WTC11 (cell line): ENCODE measurements at regions of chr12 and their contacts with region 1.

Region 1: GRCh38 chr12:114166362-114166761 is 200.2 kb upstream of the RBM19 start:
- DNase-seq: peak; percentile 66
- ATAC-seq: peak; percentile 85
- H3K4me3 Mint-ChIP-seq: no peak overlapping the region
- H3K27ac Mint-ChIP-seq: no peak overlapping the region
- H3K4me1 Mint-ChIP-seq: peaks cover 11% of the 10 kb centered on the region
- H3K27me3 Mint-ChIP-seq: peaks cover 49% of the 10 kb centered on the region
- CTCF ChIP-seq: peak; percentile 68; the same call in 1 of the 2 replicates

Region 2: GRCh38 chr12:114013575-114014345 is 152.6 kb before region 1 on chr12:
- CTCF ChIA-PET with region 1: interaction called, 11 read pairs
- POLR2A ChIA-PET with region 1: no interaction called
- DNase-seq: peak; percentile 52
- ATAC-seq: peak; percentile 80
- H3K4me3 Mint-ChIP-seq: no peak overlapping the region
- H3K27ac Mint-ChIP-seq: no peak overlapping the region
- H3K4me1 Mint-ChIP-seq: 0 out of 2 replicates have a peak, but pooled peaks cover 3% of the 10 kb centered on the region
- H3K27me3 Mint-ChIP-seq: peaks cover 8% of the 10 kb centered on the region
- CTCF ChIP-seq: no peak

Region 3: GRCh38 chr12:114186241-114187002 is 20.1 kb after region 1 on chr12:
- CTCF ChIA-PET with region 1: interaction called, 13 read pairs
- POLR2A ChIA-PET with region 1: no interaction called
- DNase-seq: peak; percentile 58
- ATAC-seq: peak; percentile 90
- H3K4me3 Mint-ChIP-seq: peak overlapping the region; percentile 39; the same call in 1 of the 2 replicates
- H3K27ac Mint-ChIP-seq: no peak overlapping the region
- H3K4me1 Mint-ChIP-seq: peaks cover 43% of the 10 kb centered on the region
- H3K27me3 Mint-ChIP-seq: peaks cover 9% of the 10 kb centered on the region
- CTCF ChIP-seq: no peak

Region 4: DNA sequence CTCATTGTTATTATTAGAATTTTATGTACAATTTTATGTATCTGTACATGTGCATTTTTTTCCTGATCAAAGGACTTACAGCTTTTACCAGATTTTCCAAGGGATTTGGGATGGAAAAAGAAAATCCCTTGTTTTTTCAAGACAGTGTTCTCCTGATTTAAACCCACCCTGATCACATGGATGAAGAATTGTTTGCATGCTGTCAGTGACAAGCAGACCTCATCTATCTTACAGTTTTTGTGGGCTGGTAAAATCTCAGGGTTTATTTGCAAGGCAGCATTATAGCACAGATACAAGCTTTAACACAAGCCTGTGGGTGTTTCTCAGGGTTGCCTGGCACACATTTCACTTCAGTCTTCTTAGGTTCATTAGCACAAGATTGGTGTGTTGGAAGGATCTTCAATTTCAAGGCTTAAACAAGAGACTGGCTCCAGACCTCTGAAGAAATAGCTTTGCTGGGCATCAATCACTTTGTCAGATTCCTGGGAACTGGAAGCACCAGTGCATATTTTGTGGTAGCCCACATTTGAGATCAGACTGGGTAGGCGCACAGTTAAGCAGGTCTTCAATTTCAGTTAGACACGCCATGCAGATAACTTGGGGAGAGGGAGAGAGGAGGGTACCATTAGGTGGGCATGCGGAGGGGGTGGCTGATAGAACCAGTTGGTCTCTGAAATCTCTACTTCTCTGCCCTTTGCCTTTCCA is 121.6 kb after region 1 on chr12:
- CTCF ChIA-PET with region 1: no interaction called
- POLR2A ChIA-PET with region 1: no interaction called
- DNase-seq: no peak
- ATAC-seq: no peak
- H3K4me3 Mint-ChIP-seq: no peak overlapping the region
- H3K27ac Mint-ChIP-seq: no peak overlapping the region; the same call in 1 of the 2 replicates
- H3K4me1 Mint-ChIP-seq: peaks cover 57% of the 10 kb centered on the region
- H3K27me3 Mint-ChIP-seq: no peaks in the 10 kb centered on the region
- CTCF ChIP-seq: no peak

Region 5: GRCh38 chr12:114355389-114356088 is 189.2 kb after region 1 on chr12:
- CTCF ChIA-PET with region 1: interaction called, 12 read pairs
- POLR2A ChIA-PET with region 1: no interaction called
- DNase-seq: peak; percentile 80
- ATAC-seq: peak; percentile 98
- H3K4me3 Mint-ChIP-seq: no peak overlapping the region
- H3K27ac Mint-ChIP-seq: no peak overlapping the region
- H3K4me1 Mint-ChIP-seq: peaks cover 14% of the 10 kb centered on the region
- H3K27me3 Mint-ChIP-seq: no peaks in the 10 kb centered on the region
- CTCF ChIP-seq: peak; percentile 42; the same call in 1 of the 2 replicates

Region 6: GRCh38 chr12:114480337-114481199 is 314.2 kb after region 1 on chr12:
- CTCF ChIA-PET with region 1: interaction called, 13 read pairs
- POLR2A ChIA-PET with region 1: no interaction called
- DNase-seq: peak; percentile 14
- ATAC-seq: no peak
- H3K4me3 Mint-ChIP-seq: peak overlapping the region; percentile 82
- H3K27ac Mint-ChIP-seq: no peak overlapping the region
- H3K4me1 Mint-ChIP-seq: peaks cover 34% of the 10 kb centered on the region
- H3K27me3 Mint-ChIP-seq: peaks cover 83% of the 10 kb centered on the region
- CTCF ChIP-seq: no peak

Region 7: DNA sequence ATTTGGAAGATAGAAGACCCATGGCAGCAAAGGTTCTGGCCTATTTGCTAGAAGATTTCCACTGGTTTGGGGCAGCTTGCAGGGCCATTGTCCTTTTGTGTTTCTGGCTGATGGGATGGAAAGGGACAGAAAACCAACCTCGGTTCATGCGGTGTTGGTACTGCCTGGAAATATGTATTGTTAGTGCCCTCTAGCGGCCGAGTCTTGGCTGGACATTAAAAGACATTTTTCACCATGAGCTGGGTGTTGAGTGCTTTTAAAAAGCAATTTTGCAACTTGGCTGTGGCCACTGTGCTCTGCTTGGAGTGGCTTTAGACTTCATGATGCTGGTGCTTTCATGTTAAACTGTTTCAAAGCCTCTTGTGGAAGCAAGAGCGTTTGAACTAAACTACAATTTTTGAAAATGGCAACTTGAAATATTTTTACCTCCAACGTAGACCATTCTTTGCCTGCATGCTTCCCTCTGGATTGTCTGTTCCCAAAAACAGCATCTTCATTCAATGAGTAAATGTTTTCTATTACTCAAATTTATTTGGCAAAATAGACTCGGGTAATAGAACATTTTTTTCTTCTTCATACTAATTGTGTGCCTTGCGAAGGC is 342.3 kb after region 1 on chr12:
- CTCF ChIA-PET with region 1: interaction called, 34 read pairs
- POLR2A ChIA-PET with region 1: no interaction called
- DNase-seq: peak; percentile 80
- ATAC-seq: peak; percentile 81
- H3K4me3 Mint-ChIP-seq: no peak overlapping the region
- H3K27ac Mint-ChIP-seq: no peak overlapping the region
- H3K4me1 Mint-ChIP-seq: no peaks in the 10 kb centered on the region
- H3K27me3 Mint-ChIP-seq: peaks cover 23% of the 10 kb centered on the region
- CTCF ChIP-seq: peak; percentile 68